Calu3 (cell line): ENCODE measurements at regions of chr11 and their contacts with region 1.

Region 1: GRCh38 chr11:22130462-22131053 is 62.3 kb upstream of the ANO5 start:
- DNase-seq: no peak
- H3K4me3 Mint-ChIP-seq: no peak overlapping the region
- H3K27ac Mint-ChIP-seq: no peak overlapping the region
- H3K4me1 Mint-ChIP-seq: no peaks in the 10 kb centered on the region
- H3K27me3 Mint-ChIP-seq: no peaks in the 10 kb centered on the region
- CTCF ChIP-seq: peak; percentile 44

Region 2: DNA sequence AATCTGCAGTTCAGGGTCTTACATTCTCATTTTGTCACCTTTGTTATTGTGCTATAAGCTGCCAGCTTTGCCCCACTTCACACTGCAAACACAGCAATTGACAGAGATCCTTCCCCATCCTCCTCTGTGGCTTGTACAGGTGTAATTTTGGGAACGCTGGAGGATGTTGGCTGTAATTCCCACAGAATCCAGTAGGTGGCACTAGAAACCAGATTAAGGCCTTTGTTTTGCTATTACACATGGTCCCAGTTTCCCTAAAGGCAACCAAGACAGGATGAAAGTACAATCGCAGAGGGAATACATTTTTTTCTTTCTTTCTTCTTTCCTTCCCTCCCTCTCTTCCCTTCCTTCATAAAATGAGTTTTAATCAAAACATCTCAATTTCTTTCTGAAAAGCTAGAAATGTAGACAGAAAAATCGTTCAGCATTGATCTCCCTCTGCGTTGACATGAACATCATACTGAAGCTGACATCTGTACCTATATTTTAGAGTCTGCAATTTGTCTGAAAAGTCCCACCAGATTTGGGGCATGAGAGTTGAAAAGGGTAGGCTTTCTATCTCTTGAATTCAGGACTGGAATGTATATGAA is 1482.5 kb before region 1 on chr11:
- CTCF ChIA-PET with region 1: interaction called, 5 read pairs
- intact Hi-C with region 1: loop called (anchors 2 kb)
- DNase-seq: peak; percentile 61
- H3K4me3 Mint-ChIP-seq: no peak overlapping the region
- H3K27ac Mint-ChIP-seq: no peak overlapping the region
- H3K4me1 Mint-ChIP-seq: no peaks in the 10 kb centered on the region
- H3K27me3 Mint-ChIP-seq: peaks cover 22% of the 10 kb centered on the region
- CTCF ChIP-seq: peak; percentile 87

Region 3: DNA sequence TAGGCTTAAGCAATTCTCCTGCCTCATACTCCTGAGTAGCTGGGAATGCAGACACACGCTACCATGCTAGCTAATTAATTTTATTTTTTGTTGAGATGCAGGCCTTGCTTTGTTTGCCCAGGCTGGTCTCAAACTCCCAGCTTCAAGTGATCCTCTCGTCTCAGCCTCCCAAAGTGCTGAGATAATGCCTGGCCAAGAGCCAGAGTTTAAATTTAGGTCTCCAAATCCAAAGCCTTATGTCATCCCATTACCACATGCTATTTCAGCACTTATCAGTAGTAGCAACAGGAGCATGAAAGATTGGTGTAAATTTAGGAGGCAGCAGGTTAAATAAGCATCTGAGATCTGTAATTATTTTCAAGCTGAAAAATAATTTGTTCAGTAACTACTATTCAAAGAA is 263.8 kb before region 1 on chr11:
- CTCF ChIA-PET with region 1: interaction called, 8 read pairs
- intact Hi-C with region 1: loop called (anchors 10 kb)
- DNase-seq: no peak
- H3K4me3 Mint-ChIP-seq: no peak overlapping the region
- H3K27ac Mint-ChIP-seq: no peak overlapping the region
- H3K4me1 Mint-ChIP-seq: no peaks in the 10 kb centered on the region
- H3K27me3 Mint-ChIP-seq: no peaks in the 10 kb centered on the region
- CTCF ChIP-seq: no peak

Region 4: GRCh38 chr11:21933095-21933494 is 197.5 kb before region 1 on chr11:
- CTCF ChIA-PET with region 1: no interaction called
- intact Hi-C with region 1: loop called (anchors 1 kb)
- DNase-seq: no peak
- H3K4me3 Mint-ChIP-seq: no peak overlapping the region
- H3K27ac Mint-ChIP-seq: no peak overlapping the region
- H3K4me1 Mint-ChIP-seq: no peaks in the 10 kb centered on the region
- H3K27me3 Mint-ChIP-seq: no peaks in the 10 kb centered on the region
- CTCF ChIP-seq: peak; percentile 53

Region 5: GRCh38 chr11:22157531-22158200 is 27.1 kb after region 1 on chr11:
- CTCF ChIA-PET with region 1: interaction called, 13 read pairs
- intact Hi-C with region 1: no loop called
- DNase-seq: no peak
- H3K4me3 Mint-ChIP-seq: no peak overlapping the region
- H3K27ac Mint-ChIP-seq: no peak overlapping the region
- H3K4me1 Mint-ChIP-seq: peaks cover 5% of the 10 kb centered on the region
- H3K27me3 Mint-ChIP-seq: peaks cover 25% of the 10 kb centered on the region
- CTCF ChIP-seq: no peak